Activated CD4-positive, alpha-beta T cell treated with anti-CD3 and anti-CD28 coated beads for 36 hours (primary cell): ENCODE measurements at regions of chr10 and their contacts with region 1.

Region 1: GRCh38 chr10:67803588-67804394 is 34.2 kb downstream of the DNAJC12 start:
- DNase-seq: peak; percentile 49
- ATAC-seq: peak; percentile 95
- H3K4me3 Mint-ChIP-seq: no peak overlapping the region
- H3K27ac Mint-ChIP-seq: peak overlapping the region; percentile 74
- H3K4me1 Mint-ChIP-seq: peaks cover 8% of the 10 kb centered on the region
- H3K27me3 Mint-ChIP-seq: no peaks in the 10 kb centered on the region

Region 2: GRCh38 chr10:67818320-67818719 is 14.5 kb after region 1 on chr10:
- CTCF ChIA-PET with region 1: interaction called, 3 read pairs
- POLR2A ChIA-PET with region 1: no interaction called
- intact Hi-C with region 1: loop called (anchors 1 kb)
- DNase-seq: no peak
- ATAC-seq: peak; percentile 16
- H3K4me3 Mint-ChIP-seq: no peak overlapping the region
- H3K27ac Mint-ChIP-seq: no peak overlapping the region
- H3K4me1 Mint-ChIP-seq: peaks cover 29% of the 10 kb centered on the region
- H3K27me3 Mint-ChIP-seq: peaks cover 3% of the 10 kb centered on the region